ENCODE measurements at regions of chr15 and their contacts with region 1.

Region 1: DNA sequence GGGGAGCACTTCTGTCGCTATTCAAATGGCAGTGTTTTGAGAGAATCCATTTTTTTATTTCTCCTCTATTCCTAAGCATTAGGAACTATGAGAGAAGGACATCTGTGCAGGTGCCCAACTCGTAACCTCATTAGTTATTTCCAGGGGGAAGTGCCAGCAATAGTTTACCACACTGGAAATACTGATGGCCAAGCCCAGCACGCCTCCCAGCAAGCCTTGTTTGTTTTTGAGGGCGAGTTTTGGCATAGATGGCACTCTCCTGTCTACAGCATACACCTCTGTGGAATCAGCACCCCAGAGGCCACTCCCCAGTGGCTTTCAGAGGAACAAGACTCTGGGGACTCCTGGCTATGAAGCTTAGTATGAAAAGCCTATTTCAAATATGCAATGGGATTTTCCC is 36.6 kb downstream of the FAN1 start:
- DNase-seq: no peak
- ATAC-seq: no peak
- H3K4me3 ChIP-seq: no peak overlapping the region
- H3K27ac ChIP-seq: no peak overlapping the region
- H3K4me1 ChIP-seq: no peaks in the 10 kb centered on the region
- H3K27me3 ChIP-seq: no peaks in the 10 kb centered on the region
- CTCF ChIP-seq: no peak
- POLR2A ChIP-seq: no peak
- RAD21 ChIP-seq: no peak

Region 2: DNA sequence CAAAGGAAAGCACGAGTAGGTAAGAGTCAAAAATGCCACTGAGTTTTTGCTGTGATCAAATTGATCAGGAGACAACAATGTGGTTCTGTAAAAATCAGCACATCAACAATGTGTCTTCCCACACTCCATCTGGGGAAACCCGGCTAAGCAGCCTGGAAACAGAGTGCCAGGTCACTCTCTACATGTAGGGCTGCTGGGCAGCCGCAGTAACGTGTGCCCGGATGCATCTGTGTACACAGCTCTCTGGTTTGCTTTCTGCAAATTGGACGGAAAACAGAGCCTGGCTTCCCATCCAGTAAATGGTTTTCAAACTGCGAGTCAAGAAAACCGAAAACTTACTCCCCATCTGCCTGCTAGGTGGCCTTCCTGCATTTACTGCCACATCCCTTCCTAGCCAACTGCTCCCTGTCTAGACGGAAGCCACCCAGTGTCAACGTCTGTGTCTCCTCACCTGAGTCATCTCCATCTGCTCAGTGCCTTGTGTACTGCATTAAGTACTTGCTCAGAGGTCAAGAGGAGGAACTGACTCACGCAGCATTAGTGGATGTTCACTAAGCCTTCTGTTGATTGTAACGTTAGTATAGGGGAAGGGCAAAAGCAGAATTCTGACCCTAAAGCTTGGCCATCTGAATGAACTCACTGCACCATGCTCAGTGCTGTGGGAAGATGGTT is 1242.2 kb before region 1 on chr15:
- CTCF ChIA-PET with region 1: no interaction called
- POLR2A ChIA-PET with region 1: no interaction called
- dilution Hi-C with region 1: no loop called
- in situ Hi-C with region 1: no loop called
- intact Hi-C with region 1: no loop called
- DNase-seq: peak; percentile 94
- ATAC-seq: peak; percentile 77
- H3K4me3 ChIP-seq: no peak overlapping the region
- H3K27ac ChIP-seq: no peak overlapping the region
- H3K4me1 ChIP-seq: no peaks in the 10 kb centered on the region
- H3K27me3 ChIP-seq: no peaks in the 10 kb centered on the region
- CTCF ChIP-seq: no peak
- POLR2A ChIP-seq: no peak
- RAD21 ChIP-seq: no peak

Region 3: GRCh38 chr15:30922480-30923311 is 17.7 kb before region 1 on chr15:
- CTCF ChIA-PET with region 1: no interaction called
- POLR2A ChIA-PET with region 1: no interaction called
- dilution Hi-C with region 1: no loop called
- in situ Hi-C with region 1: no loop called
- intact Hi-C with region 1: no loop called
- DNase-seq: peak; percentile 50
- ATAC-seq: peak; percentile 55; the same call in 1 of the 2 replicates
- H3K4me3 ChIP-seq: no peak overlapping the region
- H3K27ac ChIP-seq: no peak overlapping the region
- H3K4me1 ChIP-seq: peaks cover 20% of the 10 kb centered on the region
- H3K27me3 ChIP-seq: no peaks in the 10 kb centered on the region; the same call in 1 of the 2 replicates
- CTCF ChIP-seq: no peak
- POLR2A ChIP-seq: no peak
- RAD21 ChIP-seq: no peak

Region 4: DNA sequence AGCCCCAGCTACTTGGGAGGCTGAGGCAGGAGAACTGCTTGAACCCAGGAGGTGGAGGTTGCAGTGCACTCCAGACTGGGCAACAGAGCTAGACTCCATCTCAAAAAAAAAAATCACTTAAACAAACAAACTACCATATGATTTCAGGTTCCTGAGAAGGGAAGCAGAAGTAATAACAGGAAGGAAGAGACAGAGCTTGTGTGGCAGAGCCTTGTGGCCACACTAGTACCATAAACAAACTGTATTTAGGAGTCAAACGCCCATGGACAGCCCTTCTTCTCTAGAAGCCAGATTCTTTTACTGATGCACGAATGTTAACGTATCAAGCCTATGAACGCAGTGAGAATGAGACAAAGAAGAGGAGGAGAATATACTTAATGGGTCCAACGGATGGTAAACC is 39.1 kb after region 1 on chr15:
- CTCF ChIA-PET with region 1: no interaction called
- POLR2A ChIA-PET with region 1: no interaction called
- dilution Hi-C with region 1: no loop called
- in situ Hi-C with region 1: no loop called
- intact Hi-C with region 1: loop called (anchors 5 kb)
- DNase-seq: no peak
- ATAC-seq: no peak
- H3K4me3 ChIP-seq: no peak overlapping the region
- H3K27ac ChIP-seq: no peak overlapping the region
- H3K4me1 ChIP-seq: no peaks in the 10 kb centered on the region
- H3K27me3 ChIP-seq: no peaks in the 10 kb centered on the region
- CTCF ChIP-seq: no peak
- POLR2A ChIP-seq: no peak
- RAD21 ChIP-seq: no peak